ENCODE measurements at regions of chr6 and their contacts with region 1.

Region 1: DNA sequence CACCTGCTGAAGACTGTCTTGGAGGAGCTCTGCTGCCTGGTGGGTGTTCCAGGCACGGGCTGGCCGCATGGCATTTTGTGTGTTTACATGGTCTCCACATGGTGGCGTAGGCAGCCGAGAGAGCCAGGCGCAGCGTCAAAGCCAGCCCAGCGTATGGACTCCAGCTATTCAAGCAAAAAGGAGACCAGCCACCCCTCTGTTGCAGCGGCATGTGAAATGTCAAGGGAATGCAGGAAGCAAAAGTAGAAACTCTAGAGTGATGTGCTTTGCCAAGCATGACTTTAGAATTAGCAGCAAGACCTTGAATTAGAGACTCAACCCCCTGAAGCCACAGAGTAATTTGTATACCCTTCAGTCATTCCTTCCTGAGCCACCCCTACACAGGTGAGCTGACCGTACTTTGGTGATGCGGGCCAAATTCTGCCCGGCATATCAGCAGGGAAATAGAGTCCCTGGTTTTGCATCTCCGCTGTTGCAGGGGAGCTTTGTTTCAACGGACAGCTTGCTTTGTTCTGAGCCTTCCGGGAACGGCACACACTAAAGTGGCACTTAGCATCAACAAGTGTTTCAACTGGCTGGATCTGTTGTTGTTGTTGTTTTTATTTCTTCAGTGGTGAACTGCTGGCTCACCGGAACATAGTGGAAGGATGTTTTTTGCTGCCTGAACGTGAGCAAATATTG is 48.5 kb downstream of the FNDC1 start:
- DNase-seq: no peak
- H3K4me3 ChIP-seq: no peak overlapping the region
- H3K27me3 ChIP-seq: peaks cover 3% of the 10 kb centered on the region; the same call in 1 of the 2 replicates
- CTCF ChIP-seq: peak; percentile 59

Region 2: DNA sequence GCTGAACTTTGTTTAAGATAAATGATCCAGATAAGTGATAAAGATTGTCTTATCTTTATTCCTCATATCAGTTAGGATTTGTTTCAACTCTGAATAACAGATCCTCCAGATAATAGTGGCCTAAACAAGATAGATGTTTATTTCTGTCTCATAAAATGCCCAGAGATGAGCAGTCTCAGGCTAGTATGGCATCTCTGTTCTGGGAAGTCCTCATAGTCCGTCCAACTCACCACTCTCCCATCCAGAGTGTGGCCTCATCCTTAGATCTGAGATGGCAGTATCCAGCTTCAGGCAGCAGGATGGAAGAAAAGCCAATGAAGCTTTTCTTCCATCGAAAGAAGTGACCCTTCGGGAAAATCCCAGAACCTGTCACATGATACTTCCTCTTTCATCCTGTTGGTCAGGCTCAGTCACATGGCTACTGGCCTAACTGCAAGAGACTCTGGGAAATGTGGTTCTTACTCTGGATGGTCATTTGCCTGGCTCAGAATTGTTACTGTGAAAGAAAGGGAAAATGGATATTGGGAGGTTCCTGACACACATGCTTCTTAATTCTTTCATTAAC is 143.5 kb before region 1 on chr6:
- CTCF ChIA-PET with region 1: no interaction called
- POLR2A ChIA-PET with region 1: no interaction called
- DNase-seq: no peak
- H3K4me3 ChIP-seq: no peak overlapping the region
- H3K27me3 ChIP-seq: peaks cover 3% of the 10 kb centered on the region; the same call in 1 of the 2 replicates
- CTCF ChIP-seq: no peak

Region 3: GRCh38 chr6:159203304-159204005 is 14.3 kb before region 1 on chr6:
- CTCF ChIA-PET with region 1: interaction called, 12 read pairs
- POLR2A ChIA-PET with region 1: no interaction called
- DNase-seq: peak; percentile 72
- H3K4me3 ChIP-seq: no peak overlapping the region
- H3K27me3 ChIP-seq: no peaks in the 10 kb centered on the region
- CTCF ChIP-seq: no peak

Region 4: DNA sequence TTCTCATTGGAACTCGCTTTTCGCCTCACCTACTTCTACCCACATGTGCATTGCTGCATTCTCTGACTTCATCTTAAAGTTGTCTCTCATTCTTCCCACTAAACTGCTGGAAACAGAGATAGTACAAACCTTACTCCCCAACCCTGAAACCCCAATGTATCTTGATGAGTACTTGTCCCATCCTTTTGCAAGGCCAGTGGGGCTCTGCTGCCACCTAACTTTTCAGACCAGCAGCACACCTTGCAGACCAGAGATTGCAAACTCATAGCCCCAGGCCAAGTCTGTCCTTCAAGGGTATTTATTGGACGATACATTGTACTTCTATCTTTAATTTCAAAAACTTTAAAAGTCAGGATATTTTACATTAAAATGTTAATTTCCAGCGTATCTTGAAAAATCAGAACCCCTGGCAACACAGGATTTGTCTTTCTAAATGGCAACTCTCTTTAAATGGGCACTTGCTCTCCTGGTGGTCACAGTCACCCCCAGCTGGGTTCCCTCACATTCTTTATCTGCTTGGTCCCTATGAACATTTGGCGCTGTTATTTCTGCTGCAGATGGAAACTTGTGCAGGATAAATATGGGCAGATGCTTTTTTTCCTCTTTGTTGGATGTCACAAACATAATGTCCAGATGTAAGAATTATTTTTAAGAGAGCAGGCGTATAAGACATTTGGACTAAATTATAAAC is 391.4 kb after region 1 on chr6:
- CTCF ChIA-PET with region 1: interaction called, 10 read pairs
- POLR2A ChIA-PET with region 1: no interaction called
- DNase-seq: no peak
- H3K4me3 ChIP-seq: no peak overlapping the region
- H3K27me3 ChIP-seq: no peaks in the 10 kb centered on the region
- CTCF ChIP-seq: peak; percentile 60